ENCODE measurements at regions of chr10 and their contacts with region 1.

Region 1: GRCh38 chr10:81838953-81839352 is 36.0 kb upstream of the NRG3 start:
- DNase-seq: peak; percentile 30
- H3K4me3 ChIP-seq: no peak overlapping the region
- H3K27ac ChIP-seq: no peak overlapping the region
- H3K4me1 ChIP-seq: no peaks in the 10 kb centered on the region
- H3K27me3 ChIP-seq: peaks cover 0 to 3% of the 10 kb centered on the region in 2 experiments
- CTCF ChIP-seq: peak in 1 of 2 donors; percentile 8
- POLR2A ChIP-seq: no peak

Region 2: GRCh38 chr10:80699602-80700039 is 1139.3 kb before region 1 on chr10:
- CTCF ChIA-PET with region 1: no interaction called
- POLR2A ChIA-PET with region 1: no interaction called
- dilution Hi-C with region 1: no loop called
- intact Hi-C with region 1: loop called (anchors 5 kb)
- DNase-seq: peak; percentile 58
- H3K4me3 ChIP-seq: no peak overlapping the region
- H3K27ac ChIP-seq: no peak overlapping the region
- H3K4me1 ChIP-seq: no peaks in the 10 kb centered on the region
- H3K27me3 ChIP-seq: no peaks in the 10 kb centered on the region
- CTCF ChIP-seq: peak; percentile 74 to 92
- POLR2A ChIP-seq: no peak

Region 3: GRCh38 chr10:81873932-81874816 is 35.2 kb after region 1 on chr10:
- CTCF ChIA-PET with region 1: no interaction called
- POLR2A ChIA-PET with region 1: no interaction called
- dilution Hi-C with region 1: no loop called
- intact Hi-C with region 1: loop called (anchors 1 kb)
- DNase-seq: peak; percentile 78
- H3K4me3 ChIP-seq: peak overlapping the region; percentile 16 to 52 (median 49)
- H3K27ac ChIP-seq: no peak overlapping the region
- H3K4me1 ChIP-seq: peaks cover 16% of the 10 kb centered on the region
- H3K27me3 ChIP-seq: peaks cover 3 to 9% of the 10 kb centered on the region in 2 experiments
- CTCF ChIP-seq: peak; percentile 2 to 4
- POLR2A ChIP-seq: no peak

Region 4: GRCh38 chr10:82027711-82028110 is 188.8 kb after region 1 on chr10:
- CTCF ChIA-PET with region 1: no interaction called
- POLR2A ChIA-PET with region 1: no interaction called
- dilution Hi-C with region 1: no loop called
- intact Hi-C with region 1: loop called (anchors 5 kb)
- DNase-seq: peak; percentile 62
- H3K4me3 ChIP-seq: no peak overlapping the region
- H3K27ac ChIP-seq: no peak overlapping the region
- H3K4me1 ChIP-seq: peaks cover 7% of the 10 kb centered on the region
- H3K27me3 ChIP-seq: no peaks in the 10 kb centered on the region
- CTCF ChIP-seq: no peak
- POLR2A ChIP-seq: no peak

Region 5: GRCh38 chr10:82089333-82089732 is 250.4 kb after region 1 on chr10:
- CTCF ChIA-PET with region 1: no interaction called
- POLR2A ChIA-PET with region 1: no interaction called
- dilution Hi-C with region 1: no loop called
- intact Hi-C with region 1: loop called (anchors 10 kb)
- DNase-seq: no peak
- H3K4me3 ChIP-seq: no peak overlapping the region
- H3K27ac ChIP-seq: no peak overlapping the region
- H3K4me1 ChIP-seq: no peaks in the 10 kb centered on the region
- H3K27me3 ChIP-seq: no peaks in the 10 kb centered on the region
- CTCF ChIP-seq: no peak
- POLR2A ChIP-seq: no peak

Region 6: GRCh38 chr10:82377608-82378007 is 538.7 kb after region 1 on chr10:
- CTCF ChIA-PET with region 1: no interaction called
- POLR2A ChIA-PET with region 1: no interaction called
- dilution Hi-C with region 1: no loop called
- intact Hi-C with region 1: loop called (anchors 5 kb)
- DNase-seq: peak; percentile 61
- H3K4me3 ChIP-seq: no peak overlapping the region
- H3K27ac ChIP-seq: no peak overlapping the region
- H3K4me1 ChIP-seq: peaks cover 10% of the 10 kb centered on the region
- H3K27me3 ChIP-seq: no peaks in the 10 kb centered on the region
- CTCF ChIP-seq: peak; percentile 17 to 44
- POLR2A ChIP-seq: no peak

Region 7: GRCh38 chr10:82969405-82969804 is 1130.5 kb after region 1 on chr10:
- CTCF ChIA-PET with region 1: no interaction called
- POLR2A ChIA-PET with region 1: no interaction called
- dilution Hi-C with region 1: no loop called
- intact Hi-C with region 1: loop called (anchors 10 kb)
- DNase-seq: peak; percentile 29
- H3K4me3 ChIP-seq: no peak overlapping the region
- H3K27ac ChIP-seq: no peak overlapping the region
- H3K4me1 ChIP-seq: no peaks in the 10 kb centered on the region
- H3K27me3 ChIP-seq: no peaks in the 10 kb centered on the region
- CTCF ChIP-seq: peak in 1 of 2 donors; percentile 22
- POLR2A ChIP-seq: no peak